Heart left ventricle (tissue), 16 donors: ENCODE measurements at regions of chr7 and their contacts with region 1.

Region 1: GRCh38 chr7:114099337-114099736 is 180.5 kb upstream of the PPP1R3A start:
- DNase-seq: no peak
- ATAC-seq: no peak
- H3K4me3 ChIP-seq: no peak overlapping the region
- H3K27ac ChIP-seq: no peak overlapping the region
- H3K4me1 ChIP-seq: peaks cover 0 to 6% (median 0%) of the 10 kb centered on the region in 12 donors
- H3K27me3 ChIP-seq: peaks cover 0 to 7% (median 0%) of the 10 kb centered on the region in 9 donors
- CTCF ChIP-seq: no peak
- POLR2A ChIP-seq: no peak

Region 2: GRCh38 chr7:114539575-114539974 is 440.2 kb after region 1 on chr7:
- intact Hi-C with region 1: loop called in 1 of 10 experiments (anchors 10 kb)
- DNase-seq: peak in 1 of 5 donors; percentile 23
- ATAC-seq: no peak
- H3K4me3 ChIP-seq: no peak overlapping the region
- H3K27ac ChIP-seq: no peak overlapping the region
- H3K4me1 ChIP-seq: no peaks in the 10 kb centered on the region
- H3K27me3 ChIP-seq: no peaks in the 10 kb centered on the region
- CTCF ChIP-seq: peak in 9 of 12 donors; percentile 12 to 51 (median 25)
- POLR2A ChIP-seq: no peak